Activated CD4-positive, alpha-beta T cell treated with anti-CD3 and anti-CD28 coated beads for 36 hours (primary cell): ENCODE measurements at regions of chr10 and their contacts with region 1.

Region 1: DNA sequence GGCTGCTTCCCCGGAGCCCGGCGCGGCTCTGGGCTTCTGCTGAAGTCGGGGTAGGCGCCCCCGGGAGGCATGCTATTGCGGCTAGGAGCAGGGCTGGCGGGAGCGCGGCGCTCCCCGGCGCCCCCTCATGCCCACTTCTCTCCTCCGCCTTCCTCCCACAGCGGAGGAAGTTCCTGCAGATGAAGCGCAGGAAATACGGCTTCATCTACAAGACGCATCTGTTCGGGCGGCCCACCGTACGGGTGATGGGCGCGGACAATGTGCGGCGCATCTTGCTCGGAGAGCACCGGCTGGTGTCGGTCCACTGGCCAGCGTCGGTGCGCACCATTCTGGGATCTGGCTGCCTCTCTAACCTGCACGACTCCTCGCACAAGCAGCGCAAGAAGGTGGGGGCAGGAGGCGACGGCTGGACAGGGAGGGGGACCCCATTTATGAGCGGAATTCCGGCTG is 479 bp downstream of the CYP26A1 start:
- DNase-seq: peak; percentile 22
- ATAC-seq: no peak
- H3K4me3 Mint-ChIP-seq: peak overlapping the region; percentile 48
- H3K27ac Mint-ChIP-seq: no peak overlapping the region
- H3K4me1 Mint-ChIP-seq: peaks cover 28% of the 10 kb centered on the region
- H3K27me3 Mint-ChIP-seq: peaks cover 66% of the 10 kb centered on the region

Region 2: GRCh38 chr10:91694170-91694794 is 1379.9 kb before region 1 on chr10:
- CTCF ChIA-PET with region 1: no interaction called
- POLR2A ChIA-PET with region 1: no interaction called
- intact Hi-C with region 1: no loop called
- DNase-seq: peak; percentile 31
- ATAC-seq: no peak
- H3K4me3 Mint-ChIP-seq: no peak overlapping the region
- H3K27ac Mint-ChIP-seq: no peak overlapping the region
- H3K4me1 Mint-ChIP-seq: peaks cover 4% of the 10 kb centered on the region
- H3K27me3 Mint-ChIP-seq: peaks cover 4% of the 10 kb centered on the region

Region 3: DNA sequence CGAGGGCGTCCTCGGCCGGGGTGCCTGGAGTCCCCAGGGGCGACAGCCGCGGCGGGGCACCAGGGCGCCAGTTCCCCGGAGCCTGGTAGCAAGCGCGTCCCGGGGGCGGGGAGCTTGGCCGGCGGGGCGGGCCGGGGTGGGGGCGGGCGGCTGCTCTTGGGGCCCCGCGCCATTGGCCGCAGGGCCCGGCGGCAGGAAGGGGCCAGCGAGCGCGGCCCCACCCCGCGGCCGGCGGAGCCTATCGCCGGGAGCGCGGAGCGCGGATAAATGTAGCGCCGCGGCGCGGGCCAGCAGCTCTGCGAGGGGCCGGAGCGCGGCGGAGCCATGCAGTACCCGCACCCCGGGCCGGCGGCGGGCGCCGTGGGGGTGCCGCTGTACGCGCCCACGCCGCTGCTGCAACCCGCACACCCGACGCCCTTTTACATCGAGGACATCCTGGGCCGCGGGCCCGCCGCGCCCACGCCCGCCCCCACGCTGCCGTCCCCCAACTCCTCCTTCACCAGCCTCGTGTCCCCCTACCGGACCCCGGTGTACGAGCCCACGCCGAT is 384.4 kb before region 1 on chr10 and contains the start of gene HHEX:
- CTCF ChIA-PET with region 1: no interaction called
- POLR2A ChIA-PET with region 1: no interaction called
- intact Hi-C with region 1: loop called (anchors 5 kb)
- DNase-seq: peak; percentile 52
- ATAC-seq: peak; percentile 54
- H3K4me3 Mint-ChIP-seq: peak within 1 kb of the TSS; percentile 51
- H3K27ac Mint-ChIP-seq: no peak within 1 kb of the TSS
- H3K4me1 Mint-ChIP-seq: peaks cover 20% of the 10 kb centered on the region
- H3K27me3 Mint-ChIP-seq: peaks cover 58% of the 10 kb centered on the region
- total RNA-seq, gene HHEX: 0.11 TPM in 1 of 2 experiments, not detected in the other

Region 4: DNA sequence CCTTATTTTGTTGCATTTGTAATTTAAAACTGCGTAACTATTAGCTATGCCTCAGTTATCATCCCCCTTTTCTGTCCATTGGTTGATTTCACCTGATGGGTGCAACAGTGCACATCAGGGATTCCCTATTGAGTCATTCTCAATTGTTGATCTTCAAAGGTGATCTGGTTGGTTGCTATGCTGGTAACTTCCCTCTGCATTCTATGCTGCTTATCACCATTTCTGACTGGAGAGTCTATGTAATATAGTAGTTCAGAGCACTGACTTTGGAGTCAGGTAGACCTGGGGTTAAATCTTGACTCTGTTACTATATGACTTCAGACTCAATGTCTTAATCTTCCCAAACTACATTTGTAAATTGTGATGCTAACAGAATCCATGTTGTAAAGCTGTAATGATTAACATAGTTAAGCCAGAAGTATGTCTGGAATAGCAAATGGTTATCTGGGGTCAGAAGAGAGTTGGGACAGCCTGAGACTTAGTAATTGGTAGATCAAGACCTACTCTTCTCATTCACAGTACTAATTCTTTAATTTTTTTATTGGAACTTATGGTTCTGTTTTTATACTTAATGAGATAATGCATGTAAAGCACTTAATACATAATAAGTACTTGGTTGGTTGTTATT is 187.7 kb before region 1 on chr10:
- CTCF ChIA-PET with region 1: no interaction called
- POLR2A ChIA-PET with region 1: no interaction called
- intact Hi-C with region 1: loop called (anchors 5 to 10 kb)
- DNase-seq: no peak
- ATAC-seq: peak; percentile 33
- H3K4me3 Mint-ChIP-seq: no peak overlapping the region
- H3K27ac Mint-ChIP-seq: no peak overlapping the region
- H3K4me1 Mint-ChIP-seq: peaks cover 8% of the 10 kb centered on the region
- H3K27me3 Mint-ChIP-seq: no peaks in the 10 kb centered on the region

Region 5: GRCh38 chr10:92965314-92965713 is 108.9 kb before region 1 on chr10:
- CTCF ChIA-PET with region 1: interaction called, 6 read pairs
- POLR2A ChIA-PET with region 1: no interaction called
- intact Hi-C with region 1: loop called (anchors 5 to 10 kb)
- DNase-seq: no peak
- ATAC-seq: no peak
- H3K4me3 Mint-ChIP-seq: no peak overlapping the region
- H3K27ac Mint-ChIP-seq: no peak overlapping the region
- H3K4me1 Mint-ChIP-seq: no peaks in the 10 kb centered on the region
- H3K27me3 Mint-ChIP-seq: no peaks in the 10 kb centered on the region

Region 6: GRCh38 chr10:93062514-93063143 is 11.5 kb before region 1 on chr10:
- CTCF ChIA-PET with region 1: interaction called, 6 read pairs
- POLR2A ChIA-PET with region 1: interaction called, 3 read pairs
- intact Hi-C with region 1: loop called in 1 of 2 experiments (anchors 2 kb)
- DNase-seq: peak; percentile 81
- ATAC-seq: peak; percentile 91
- H3K4me3 Mint-ChIP-seq: peak overlapping the region; percentile 66
- H3K27ac Mint-ChIP-seq: no peak overlapping the region
- H3K4me1 Mint-ChIP-seq: peaks cover 21% of the 10 kb centered on the region
- H3K27me3 Mint-ChIP-seq: peaks cover 53% of the 10 kb centered on the region